ENCODE measurements at regions of chr20 and their contacts with region 1.

Region 1: DNA sequence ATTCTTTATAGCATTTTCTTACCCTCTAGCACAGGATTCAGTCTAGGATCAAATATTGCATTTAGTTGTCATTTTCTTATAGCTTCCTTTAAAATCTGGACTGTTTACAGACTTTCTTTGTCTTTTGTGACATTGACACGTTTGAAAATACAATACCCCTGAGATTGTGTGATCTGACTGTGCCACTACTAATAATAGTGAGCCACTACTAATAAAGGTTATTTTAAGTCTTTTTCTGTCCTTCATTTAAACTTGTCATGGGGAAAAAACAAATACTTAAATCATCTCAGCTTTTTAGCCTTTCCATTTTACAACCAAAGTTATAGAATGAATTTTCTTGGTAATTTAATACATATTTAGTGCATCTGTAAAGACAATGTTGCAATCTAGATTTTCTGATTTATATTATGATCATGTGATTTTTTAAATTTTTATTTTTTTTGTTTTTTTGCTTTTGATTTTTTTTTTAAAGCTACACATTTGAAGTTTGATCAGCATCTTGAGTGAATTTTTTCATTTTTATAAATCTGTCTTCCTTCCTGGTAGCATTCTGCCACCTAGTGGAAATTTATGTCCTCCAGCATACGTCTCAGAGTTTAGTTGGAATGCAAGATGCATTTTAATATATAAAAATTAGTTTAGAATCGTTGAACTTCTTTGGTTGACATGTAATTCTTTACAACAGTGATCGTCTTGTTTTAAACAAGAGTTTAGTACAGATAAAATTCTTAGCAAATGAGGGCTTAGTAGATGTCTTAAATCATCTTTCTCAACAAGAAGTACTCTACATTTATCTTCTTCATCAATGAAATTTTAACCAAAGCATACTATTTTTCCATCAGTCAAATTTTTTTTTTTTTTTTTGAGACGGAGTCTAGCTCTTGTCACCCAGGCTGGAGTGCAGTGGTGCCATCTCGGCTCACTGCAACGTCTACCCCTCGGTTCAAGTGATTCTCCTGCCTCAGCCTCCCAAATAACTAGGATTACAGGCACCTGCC is 119.4 kb downstream of the NCOA3 start:
- DNase-seq: no peak
- ATAC-seq: peak; percentile 56

Region 2: GRCh38 chr20:46757754-46758678 is 863.1 kb before region 1 on chr20:
- intact Hi-C with region 1: loop called (anchors 10 kb)
- DNase-seq: peak; percentile 76
- ATAC-seq: peak; percentile 72